PC-9 (cell line): ENCODE measurements at regions of chr6 and their contacts with region 1.

Region 1: GRCh38 chr6:123074616-123075015 is 78.6 kb downstream of the CLVS2 start:
- DNase-seq: peak in 1 of 2 experiments; percentile 39
- H3K4me3 ChIP-seq: no peak overlapping the region
- H3K27ac ChIP-seq: no peak overlapping the region
- H3K4me1 ChIP-seq: peaks cover 8% of the 10 kb centered on the region
- H3K27me3 ChIP-seq: no peaks in the 10 kb centered on the region
- CTCF ChIP-seq: no peak

Region 2: DNA sequence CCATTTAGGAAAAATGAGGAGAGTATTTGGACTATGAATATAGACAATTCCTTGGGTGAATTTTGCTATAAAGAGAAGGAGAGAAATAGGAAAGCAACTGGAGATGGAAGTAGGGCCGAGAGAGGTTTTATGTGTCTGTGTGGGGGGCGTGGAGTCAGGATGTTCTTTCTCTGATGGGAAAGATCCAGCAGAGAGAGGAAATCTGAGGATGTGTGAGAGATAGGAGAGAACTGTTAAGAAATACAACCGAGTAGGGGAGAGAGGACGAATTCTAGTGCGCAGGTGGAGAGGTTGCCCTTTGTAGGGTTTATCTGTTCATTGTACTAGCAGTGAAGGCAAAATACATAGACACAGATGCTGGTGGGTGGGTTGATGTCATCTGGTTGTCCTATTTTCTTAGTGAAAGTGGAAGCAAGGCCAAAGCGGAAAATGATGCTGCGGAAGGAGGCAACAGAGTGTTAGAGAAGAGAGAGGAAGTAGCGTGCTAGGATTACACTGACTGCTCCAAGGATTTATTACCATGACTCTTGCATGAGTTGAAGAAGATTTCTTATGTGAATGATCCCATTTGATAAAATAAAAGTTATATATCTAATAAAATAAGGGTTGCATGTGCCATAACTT is 20.9 kb before region 1 on chr6:
- CTCF ChIA-PET with region 1: interaction called, 11 read pairs
- POLR2A ChIA-PET with region 1: no interaction called
- intact Hi-C with region 1: no loop called
- DNase-seq: no peak
- H3K4me3 ChIP-seq: no peak overlapping the region
- H3K27ac ChIP-seq: no peak overlapping the region
- H3K4me1 ChIP-seq: peaks cover 27% of the 10 kb centered on the region
- H3K27me3 ChIP-seq: no peaks in the 10 kb centered on the region
- CTCF ChIP-seq: no peak